Dorsolateral prefrontal cortex (tissue), 120 donors: ENCODE measurements at regions of chrX and their contacts with region 1.

Region 1: GRCh38 chrX:70133303-70134115 is at the start of gene IGBP1:
- DNase-seq: peak; percentile 64 to 92 (median 84)
- H3K4me3 ChIP-seq: peak within 1 kb of the TSS; percentile 54 to 86 (median 72)
- H3K27ac ChIP-seq: peak within 1 kb of the TSS in 51 of 59 donors; percentile 29 to 86 (median 67)
- H3K27me3 ChIP-seq: peaks cover 0 to 43% (median 5%) of the 10 kb centered on the region in 45 donors
- CTCF ChIP-seq: peak; percentile 26 to 78 (median 60)
- total RNA-seq, gene IGBP1: 25.0 to 50.5 (median 38.3) TPM

Region 2: GRCh38 chrX:70262952-70263567 is 129.6 kb after region 1 on chrX:
- intact Hi-C with region 1: loop called in 1 of 2 experiments (anchors 10 kb)
- DNase-seq: peak in 3 of 10 donors; percentile 8 to 43 (median 10)
- H3K4me3 ChIP-seq: no peak overlapping the region
- H3K27ac ChIP-seq: no peak overlapping the region
- H3K27me3 ChIP-seq: peaks cover 0 to 88% (median 19%) of the 10 kb centered on the region in 45 donors
- CTCF ChIP-seq: peak in 39 of 56 donors; percentile 9 to 52 (median 28)

Region 3: DNA sequence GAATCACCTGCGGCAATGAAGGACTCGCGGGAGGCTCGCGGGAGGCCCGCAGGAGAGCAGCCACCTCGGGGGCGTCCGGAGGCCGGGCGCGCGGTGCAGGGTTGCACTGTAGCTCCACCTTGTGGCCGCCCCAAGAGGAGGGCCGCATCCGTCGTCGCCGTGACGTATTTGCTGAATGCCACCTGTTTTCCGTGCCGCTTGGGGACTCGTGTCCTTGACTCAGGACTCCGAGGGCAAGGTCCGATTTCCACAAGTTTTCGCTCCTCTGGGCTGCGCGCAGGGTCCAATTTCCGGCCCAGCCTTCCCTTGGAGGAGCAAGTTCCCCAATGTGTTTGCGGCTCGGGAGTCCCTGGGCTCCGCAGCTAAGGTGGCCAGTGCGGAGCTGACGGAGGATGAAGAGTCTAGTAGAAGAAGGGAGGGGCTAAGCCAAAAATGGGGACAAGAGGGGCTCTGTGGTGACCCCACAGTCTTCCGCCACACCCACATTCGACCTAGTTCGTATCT is 300.4 kb after region 1 on chrX:
- intact Hi-C with region 1: loop called (anchors 5 to 10 kb)
- DNase-seq: peak in 9 of 10 donors; percentile 48 to 84 (median 73)
- H3K4me3 ChIP-seq: peak overlapping the region; percentile 39 to 81 (median 67)
- H3K27ac ChIP-seq: peak overlapping the region in 55 of 59 donors; percentile 25 to 89 (median 78)
- H3K27me3 ChIP-seq: peaks cover 0 to 80% (median 26%) of the 10 kb centered on the region in 45 donors
- CTCF ChIP-seq: peak in 55 of 56 donors; percentile 37 to 83 (median 68)